AG04449 (cell line): ENCODE measurements at regions of chr18 and their contacts with region 1.

Region 1: GRCh38 chr18:77000527-77000926 is 132.1 kb downstream of the MBP start:
- DNase-seq: no peak
- H3K4me3 ChIP-seq: peak overlapping the region; percentile 10
- CTCF ChIP-seq: peak; percentile 86

Region 2: DNA sequence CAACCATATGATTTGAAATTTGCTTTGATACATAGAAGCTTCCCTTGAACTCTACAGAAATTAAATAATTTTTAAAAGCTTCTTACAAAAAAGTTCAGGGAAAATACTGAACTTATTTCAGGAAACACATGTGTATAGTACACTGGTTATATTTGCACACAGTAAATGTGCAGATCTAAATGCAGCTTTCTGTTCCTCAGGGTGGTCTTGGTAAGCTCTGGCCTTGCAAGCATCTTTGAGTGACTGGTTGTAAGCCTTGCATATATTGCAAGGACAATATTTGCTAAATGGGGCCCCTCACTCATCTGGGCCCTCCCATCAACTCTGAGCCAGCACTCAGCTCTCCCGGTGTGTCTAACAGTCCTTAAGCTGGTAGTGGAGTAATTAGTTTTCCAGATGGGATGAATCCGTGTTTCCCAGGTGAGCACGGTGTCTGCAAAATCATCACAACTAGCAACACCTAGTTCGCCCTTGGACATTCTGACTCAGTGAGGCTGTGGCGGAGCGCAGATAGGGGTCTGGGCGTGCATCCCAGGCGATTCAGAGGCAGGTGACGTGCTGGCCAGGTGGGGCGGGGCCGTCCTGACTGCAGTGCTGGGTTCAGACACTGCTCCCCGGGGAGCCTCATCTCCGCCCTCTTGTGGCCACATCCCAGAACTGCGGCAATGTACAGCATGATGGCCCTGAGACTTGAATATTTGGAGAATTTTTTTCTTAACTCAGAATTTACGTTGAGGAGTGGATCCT is 17.5 kb before region 1 on chr18:
- CTCF ChIA-PET with region 1: interaction called, 84 read pairs
- POLR2A ChIA-PET with region 1: no interaction called
- DNase-seq: no peak
- H3K4me3 ChIP-seq: no peak overlapping the region
- CTCF ChIP-seq: peak; percentile 93

Region 3: GRCh38 chr18:77013811-77014521 is 13.4 kb after region 1 on chr18:
- CTCF ChIA-PET with region 1: interaction called, 22 read pairs
- POLR2A ChIA-PET with region 1: no interaction called
- DNase-seq: no peak
- H3K4me3 ChIP-seq: no peak overlapping the region
- CTCF ChIP-seq: no peak

Region 4: DNA sequence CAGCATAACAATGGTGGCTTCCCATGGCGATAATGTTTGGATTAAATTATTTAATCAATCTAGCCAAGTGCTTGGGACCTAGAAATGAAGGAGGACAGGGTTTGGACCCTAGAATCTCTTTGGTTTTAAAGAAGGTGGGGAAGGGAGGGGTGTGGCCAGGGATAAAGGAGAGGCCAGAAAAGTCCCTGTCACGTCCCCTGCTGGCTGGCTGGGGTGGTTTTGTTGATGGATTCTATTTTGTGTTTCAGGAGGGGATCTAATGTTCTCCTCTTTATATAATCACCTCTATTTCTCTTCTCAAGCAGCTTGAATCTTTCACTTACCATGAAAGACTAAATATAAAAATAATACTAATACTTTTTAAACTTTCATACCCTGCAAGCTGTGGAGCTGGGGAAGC is 196.5 kb after region 1 on chr18:
- CTCF ChIA-PET with region 1: interaction called, 15 read pairs
- POLR2A ChIA-PET with region 1: no interaction called
- DNase-seq: no peak
- H3K4me3 ChIP-seq: no peak overlapping the region
- CTCF ChIP-seq: no peak

Region 5: GRCh38 chr18:77218642-77219041 is 218.1 kb after region 1 on chr18:
- CTCF ChIA-PET with region 1: interaction called, 268 read pairs
- POLR2A ChIA-PET with region 1: no interaction called
- DNase-seq: no peak
- H3K4me3 ChIP-seq: no peak overlapping the region
- CTCF ChIP-seq: no peak